ENCODE measurements at regions of chr7 and their contacts with region 1.

Region 1: DNA sequence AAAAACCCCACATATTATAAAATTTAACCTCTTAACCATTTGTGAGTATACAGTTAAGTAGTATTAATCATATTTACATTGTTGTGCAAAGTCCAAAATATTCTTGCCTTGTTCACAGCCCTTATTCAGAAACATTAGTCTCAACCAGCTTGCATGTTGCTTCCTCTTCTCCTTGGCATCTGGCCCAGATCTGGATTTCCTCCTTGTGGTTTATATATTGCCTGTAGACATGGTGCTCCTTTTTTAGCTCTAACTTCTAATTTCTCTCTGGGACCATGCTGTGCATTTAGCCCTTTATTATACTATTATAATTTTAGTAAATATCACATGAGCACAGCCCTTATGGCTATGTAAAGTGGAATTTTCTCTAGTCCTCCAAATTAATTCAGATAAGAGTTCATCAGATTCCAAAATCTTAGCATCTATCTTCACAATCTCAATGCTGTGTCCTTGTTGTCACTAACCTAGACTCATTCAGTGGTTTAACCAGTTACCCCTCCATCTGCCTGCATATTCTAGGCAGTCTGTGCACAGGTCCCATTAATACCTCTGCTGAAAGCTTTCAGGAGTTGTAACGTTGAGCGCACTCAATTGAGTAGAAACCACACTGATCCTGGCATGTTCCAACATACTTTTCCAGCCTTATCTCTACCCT is 7.9 kb downstream of the CPED1 start:
- DNase-seq: no peak
- CTCF ChIP-seq: no peak

Region 2: GRCh38 chr7:121081327-121081936 is 85.0 kb after region 1 on chr7:
- in situ Hi-C with region 1: loop called (anchors 10 kb)
- DNase-seq: peak; percentile 23
- CTCF ChIP-seq: peak; percentile 63

Region 3: GRCh38 chr7:121153995-121154394 is 157.5 kb after region 1 on chr7:
- in situ Hi-C with region 1: no loop called
- DNase-seq: no peak
- CTCF ChIP-seq: no peak